Heart left ventricle (tissue), 16 donors: ENCODE measurements at regions of chr1 and their contacts with region 1.

Region 1: GRCh38 chr1:217134857-217135568 is 411.8 kb upstream of the ESRRG start:
- DNase-seq: peak in 2 of 5 donors; percentile 31 to 36
- ATAC-seq: peak in 3 of 4 donors; percentile 60 to 63 (median 60)
- H3K4me3 ChIP-seq: peak overlapping the region; percentile 28 to 65 (median 49)
- H3K27ac ChIP-seq: peak overlapping the region in 10 of 12 donors; percentile 15 to 82 (median 62)
- H3K4me1 ChIP-seq: peaks cover 0 to 23% (median 0%) of the 10 kb centered on the region in 12 donors
- H3K27me3 ChIP-seq: peaks cover 0 to 69% (median 26%) of the 10 kb centered on the region in 9 donors
- CTCF ChIP-seq: no peak
- POLR2A ChIP-seq: no peak

Region 2: DNA sequence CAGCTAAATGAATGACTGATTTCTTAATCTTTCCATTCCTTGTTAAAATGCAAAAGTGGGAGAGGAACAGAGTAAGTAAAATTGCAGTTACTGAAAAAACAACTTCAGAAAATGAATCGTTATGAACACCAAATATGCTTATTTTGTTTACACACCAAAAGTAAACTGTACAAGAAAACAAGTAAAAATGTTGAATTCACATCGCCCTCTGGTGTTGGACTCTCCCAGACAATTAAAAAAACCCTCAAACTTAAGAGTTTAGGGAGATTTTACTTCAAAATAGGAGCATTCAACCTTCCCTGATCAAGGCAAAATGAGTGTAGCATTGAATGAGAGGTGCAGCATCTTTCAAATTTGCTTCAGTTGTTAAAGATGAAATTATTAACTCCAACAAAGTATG is 392.4 kb before region 1 on chr1:
- intact Hi-C with region 1: loop called in 1 of 10 experiments (anchors 10 kb)
- DNase-seq: no peak
- ATAC-seq: no peak
- H3K4me3 ChIP-seq: no peak overlapping the region
- H3K27ac ChIP-seq: no peak overlapping the region
- H3K4me1 ChIP-seq: peaks cover 0 to 11% (median 0%) of the 10 kb centered on the region in 12 donors
- H3K27me3 ChIP-seq: no peaks in the 10 kb centered on the region
- CTCF ChIP-seq: peak in 7 of 12 donors; percentile 16 to 33 (median 24)
- POLR2A ChIP-seq: no peak

Region 3: DNA sequence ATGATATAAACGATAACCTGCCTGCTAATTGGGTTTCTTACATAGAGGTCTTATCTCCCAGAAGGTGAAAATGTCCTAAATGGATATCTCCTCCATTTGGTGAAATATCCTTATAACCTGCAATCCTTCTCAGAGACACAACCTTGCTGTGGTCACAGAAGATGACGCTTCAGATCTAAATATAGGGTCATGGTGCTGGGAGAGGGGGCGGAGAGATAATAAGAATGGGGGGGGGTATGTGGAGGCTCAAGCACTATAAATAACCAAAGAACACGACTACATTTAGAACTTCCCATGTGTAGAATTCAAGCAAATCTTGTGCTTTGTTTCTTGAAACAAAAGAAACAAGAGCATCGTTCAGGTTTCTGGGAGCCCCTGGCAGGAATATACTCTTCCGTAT is 151.2 kb before region 1 on chr1:
- intact Hi-C with region 1: loop called in 1 of 10 experiments (anchors 10 kb)
- DNase-seq: peak in 2 of 5 donors; percentile 18 to 28
- ATAC-seq: peak; percentile 83 to 96 (median 88)
- H3K4me3 ChIP-seq: no peak overlapping the region
- H3K27ac ChIP-seq: peak overlapping the region in 6 of 12 donors; percentile 38 to 67 (median 52)
- H3K4me1 ChIP-seq: peaks cover 0 to 10% (median 0%) of the 10 kb centered on the region in 12 donors
- H3K27me3 ChIP-seq: no peaks in the 10 kb centered on the region
- CTCF ChIP-seq: no peak
- POLR2A ChIP-seq: no peak

Region 4: DNA sequence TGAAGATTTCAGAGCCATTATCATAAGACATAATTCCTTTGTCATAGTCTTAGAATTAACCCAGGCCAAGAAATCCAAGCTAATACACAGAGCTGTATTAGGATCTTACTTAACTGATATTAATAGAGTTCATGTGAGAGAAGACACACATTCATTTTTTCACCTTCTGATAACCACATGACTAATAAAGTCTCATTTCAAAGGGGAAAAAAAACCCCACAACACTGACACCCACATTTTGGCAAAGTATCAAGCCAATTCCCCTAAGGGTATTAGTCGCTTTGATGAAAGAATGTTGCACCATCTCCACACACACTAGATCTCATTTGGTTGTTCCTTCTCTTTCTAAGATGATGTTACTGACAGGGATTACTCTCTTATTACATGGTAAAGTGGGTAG is 67.4 kb before region 1 on chr1:
- intact Hi-C with region 1: no loop called
- DNase-seq: no peak
- ATAC-seq: no peak
- H3K4me3 ChIP-seq: no peak overlapping the region
- H3K27ac ChIP-seq: no peak overlapping the region
- H3K4me1 ChIP-seq: peaks cover 0 to 9% (median 0%) of the 10 kb centered on the region in 12 donors
- H3K27me3 ChIP-seq: no peaks in the 10 kb centered on the region
- CTCF ChIP-seq: no peak
- POLR2A ChIP-seq: no peak

Region 5: GRCh38 chr1:217089361-217090014 is 45.5 kb before region 1 on chr1:
- intact Hi-C with region 1: loop called in 1 of 10 experiments (anchors 2 kb)
- DNase-seq: peak; percentile 28 to 65 (median 51)
- ATAC-seq: peak; percentile 70 to 92 (median 84)
- H3K4me3 ChIP-seq: peak overlapping the region; percentile 35 to 79 (median 54)
- H3K27ac ChIP-seq: peak overlapping the region; percentile 73 to 98 (median 82)
- H3K4me1 ChIP-seq: peaks cover 0 to 16% (median 3%) of the 10 kb centered on the region in 12 donors
- H3K27me3 ChIP-seq: peaks cover 0 to 14% (median 0%) of the 10 kb centered on the region in 9 donors
- CTCF ChIP-seq: no peak
- POLR2A ChIP-seq: no peak

Region 6: DNA sequence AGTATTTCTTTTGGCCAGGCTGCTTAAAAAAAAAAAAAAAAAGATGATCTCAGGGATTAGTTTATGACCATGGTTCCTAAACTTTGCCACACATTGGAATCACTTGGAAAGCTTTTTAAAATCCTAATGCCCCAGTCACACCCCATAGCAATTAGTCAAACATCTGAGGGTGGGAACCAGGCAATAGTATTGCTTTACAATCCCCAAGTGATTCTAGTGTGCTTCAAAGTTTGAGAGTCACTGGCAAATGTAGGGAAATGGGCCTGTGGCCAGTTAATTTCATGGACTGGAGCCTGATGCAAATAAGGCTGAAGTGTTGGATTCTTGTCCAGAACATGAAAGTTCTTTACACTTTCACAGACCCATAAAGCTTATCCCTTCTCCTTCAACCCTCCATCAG is 37.2 kb before region 1 on chr1:
- intact Hi-C with region 1: loop called in 1 of 10 experiments (anchors 5 kb)
- DNase-seq: no peak
- ATAC-seq: no peak
- H3K4me3 ChIP-seq: no peak overlapping the region
- H3K27ac ChIP-seq: no peak overlapping the region
- H3K4me1 ChIP-seq: no peaks in the 10 kb centered on the region
- H3K27me3 ChIP-seq: no peaks in the 10 kb centered on the region
- CTCF ChIP-seq: no peak
- POLR2A ChIP-seq: no peak

Region 7: DNA sequence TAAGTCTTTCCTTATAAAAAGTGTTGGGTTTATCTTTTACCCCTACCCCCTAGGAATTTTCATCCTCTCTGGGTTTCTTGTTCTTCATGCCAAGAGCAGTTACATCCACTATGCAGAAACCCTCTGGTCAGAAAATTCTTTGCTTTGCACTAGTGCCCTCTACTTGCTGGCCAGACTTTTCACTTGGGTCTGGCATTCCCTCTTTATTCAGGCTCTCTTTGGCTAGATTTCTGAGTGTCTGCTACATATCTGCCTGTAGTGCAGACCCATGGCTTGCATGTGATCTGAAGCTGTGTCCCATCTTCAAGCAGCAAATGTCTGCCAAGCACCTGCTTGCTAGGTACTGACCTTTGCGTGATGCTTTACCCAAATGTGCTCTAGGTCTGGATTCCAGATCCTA is 258.9 kb after region 1 on chr1:
- intact Hi-C with region 1: no loop called
- DNase-seq: no peak
- ATAC-seq: peak in 1 of 4 donors; percentile 48
- H3K4me3 ChIP-seq: no peak overlapping the region
- H3K27ac ChIP-seq: no peak overlapping the region
- H3K4me1 ChIP-seq: no peaks in the 10 kb centered on the region
- H3K27me3 ChIP-seq: no peaks in the 10 kb centered on the region
- CTCF ChIP-seq: peak in 6 of 12 donors; percentile 14 to 35 (median 26)
- POLR2A ChIP-seq: no peak